Head of caudate nucleus (tissue), 42 donors: ENCODE measurements at regions of chr2 and their contacts with region 1.

Region 1: DNA sequence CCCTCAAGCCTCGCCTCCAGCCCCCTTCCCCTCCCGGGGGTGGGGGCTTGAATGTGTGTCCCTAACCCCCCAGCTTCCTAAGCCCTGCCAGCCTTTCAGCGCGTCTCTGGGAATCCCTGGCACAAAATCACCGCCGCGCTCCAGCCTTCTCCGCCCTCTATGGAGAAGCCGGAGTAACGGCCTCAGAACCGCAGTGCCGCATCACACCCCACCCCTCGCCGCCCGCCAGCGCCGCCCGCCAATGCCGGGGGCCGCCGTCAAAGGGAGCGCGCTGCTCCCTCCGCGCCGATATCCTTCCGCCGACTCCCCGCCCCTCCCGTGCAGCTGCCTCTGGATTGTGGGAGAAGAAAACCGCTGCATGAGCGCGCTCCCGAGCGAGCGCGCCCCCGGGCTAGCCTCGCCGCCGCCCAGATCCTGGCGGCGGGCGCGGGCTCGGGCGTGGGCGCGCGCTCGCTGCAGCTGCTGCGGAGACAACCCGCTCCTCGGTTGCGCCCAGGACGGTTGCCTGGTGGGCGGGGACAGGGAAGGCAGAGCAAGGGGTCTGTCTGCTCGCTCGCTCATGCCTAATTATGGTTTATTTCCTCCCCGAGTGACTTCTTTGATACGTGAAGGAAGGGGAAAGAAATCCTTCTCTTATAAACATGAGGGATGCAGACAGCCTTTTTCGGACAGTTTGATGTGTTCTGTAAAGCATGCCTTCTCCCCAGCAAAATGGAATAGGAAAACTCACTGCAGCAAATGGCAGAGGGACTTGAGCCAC is at the start of gene CCDC88A:
- DNase-seq: peak; percentile 90 to 98 (median 96)

Region 2: DNA sequence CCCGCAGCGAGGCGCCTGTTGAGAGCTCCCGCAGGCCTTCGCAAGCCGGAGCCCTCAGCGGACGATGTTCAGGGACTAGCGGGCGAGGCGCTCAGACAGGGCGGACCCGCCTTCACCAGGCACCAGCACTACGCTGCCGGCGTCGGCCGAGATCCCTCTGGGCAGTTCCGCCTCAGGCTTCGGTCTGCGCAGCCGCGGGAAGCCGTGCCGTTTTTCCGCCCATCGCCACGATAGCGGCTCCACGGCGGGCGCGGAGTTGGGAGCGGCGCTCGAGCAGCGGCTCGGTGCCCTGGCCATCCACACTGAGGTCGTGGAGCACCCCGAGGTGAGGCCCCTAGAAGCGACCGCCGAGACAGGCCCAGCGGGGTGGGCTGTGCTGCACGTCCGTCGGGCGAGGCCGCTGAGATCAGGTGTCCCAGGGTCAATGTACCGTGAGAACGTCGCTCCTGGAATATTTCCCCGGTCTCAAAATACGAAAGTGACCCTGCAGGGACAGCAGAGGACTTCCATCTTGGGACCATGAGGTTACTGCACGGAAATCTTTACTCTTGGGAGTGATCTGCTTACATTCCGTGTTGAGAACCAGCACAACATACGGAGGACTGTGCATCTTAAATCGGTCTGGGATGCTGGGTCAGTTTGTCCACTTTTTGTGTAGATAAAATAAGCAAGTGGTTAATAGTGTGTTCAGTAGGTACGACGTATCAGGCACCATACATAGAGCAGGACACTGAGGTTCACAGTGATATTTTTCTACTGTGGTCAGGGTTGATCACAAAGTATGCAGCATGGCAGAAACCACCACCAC is 137.5 kb before region 1 on chr2:
- intact Hi-C with region 1: loop called (anchors 5 kb)
- DNase-seq: peak; percentile 58 to 92 (median 86)

Region 3: GRCh38 chr2:55364189-55365055 is 55.4 kb before region 1 on chr2:
- intact Hi-C with region 1: loop called (anchors 5 kb)
- DNase-seq: peak in 31 of 42 donors; percentile 21 to 89 (median 61)

Region 4: GRCh38 chr2:55519938-55520885 is 100.4 kb after region 1 on chr2:
- intact Hi-C with region 1: loop called (anchors 10 kb)
- DNase-seq: peak in 40 of 42 donors; percentile 9 to 78 (median 50)

Region 5: GRCh38 chr2:55530539-55531081 is 110.8 kb after region 1 on chr2:
- intact Hi-C with region 1: no loop called
- DNase-seq: no peak